Heart right ventricle (tissue), 16 donors: ENCODE measurements at regions of chr2 and their contacts with region 1.

Region 1: DNA sequence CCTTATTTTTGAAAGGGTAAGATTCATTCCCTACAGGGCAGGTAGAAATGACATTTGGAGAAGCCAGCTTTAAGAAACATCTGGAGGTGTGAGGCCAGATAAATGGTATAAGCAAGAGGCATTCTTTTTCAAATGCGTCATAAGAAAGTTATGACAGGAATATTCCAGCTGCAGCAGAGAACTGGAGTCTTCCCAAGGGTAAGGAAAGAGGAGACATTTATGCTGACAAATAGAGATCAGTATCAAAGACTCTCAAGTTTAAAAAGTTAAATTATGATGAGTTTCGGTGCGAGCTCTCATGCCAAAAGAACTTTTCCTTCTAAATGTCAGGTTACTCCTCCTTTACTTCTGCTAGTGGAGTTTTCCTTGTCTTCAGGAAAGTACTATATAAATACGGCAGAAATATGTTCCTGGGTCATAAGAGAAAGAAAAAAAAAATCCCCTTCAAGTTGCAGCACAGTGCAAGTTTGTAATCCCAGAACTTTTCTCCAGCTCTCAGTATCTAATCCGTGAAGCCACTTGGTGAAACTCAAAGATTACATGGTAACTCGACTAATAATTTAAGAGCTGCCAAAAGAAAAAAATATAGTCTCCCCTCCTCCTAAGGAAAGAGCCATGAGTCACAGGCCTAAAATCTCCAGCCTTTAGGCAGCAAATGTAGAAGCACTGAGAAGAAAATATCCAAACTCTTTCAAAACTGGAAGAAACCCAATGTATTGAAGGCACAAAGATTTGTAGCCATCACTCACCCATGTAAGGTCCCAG is 428.1 kb downstream of the MEIS1 start:
- DNase-seq: no peak
- ATAC-seq: peak in 3 of 8 donors; percentile 35 to 42 (median 39)
- H3K4me3 ChIP-seq: no peak overlapping the region
- H3K27ac ChIP-seq: peak overlapping the region in 1 of 10 donors; percentile 40
- H3K4me1 ChIP-seq: peaks cover 0 to 4% (median 0%) of the 10 kb centered on the region in 9 donors
- H3K27me3 ChIP-seq: peaks cover 0 to 3% (median 0%) of the 10 kb centered on the region in 7 donors
- CTCF ChIP-seq: no peak

Region 2: GRCh38 chr2:65443509-65444201 is 1419.4 kb before region 1 on chr2:
- intact Hi-C with region 1: no loop called
- DNase-seq: no peak
- ATAC-seq: no peak
- H3K4me3 ChIP-seq: no peak overlapping the region
- H3K27ac ChIP-seq: no peak overlapping the region
- H3K4me1 ChIP-seq: no peaks in the 10 kb centered on the region
- H3K27me3 ChIP-seq: no peaks in the 10 kb centered on the region
- CTCF ChIP-seq: no peak

Region 3: GRCh38 chr2:66753660-66754059 is 109.4 kb before region 1 on chr2:
- intact Hi-C with region 1: no loop called
- DNase-seq: no peak
- ATAC-seq: no peak
- H3K4me3 ChIP-seq: no peak overlapping the region
- H3K27ac ChIP-seq: no peak overlapping the region
- H3K4me1 ChIP-seq: no peaks in the 10 kb centered on the region
- H3K27me3 ChIP-seq: no peaks in the 10 kb centered on the region
- CTCF ChIP-seq: no peak

Region 4: DNA sequence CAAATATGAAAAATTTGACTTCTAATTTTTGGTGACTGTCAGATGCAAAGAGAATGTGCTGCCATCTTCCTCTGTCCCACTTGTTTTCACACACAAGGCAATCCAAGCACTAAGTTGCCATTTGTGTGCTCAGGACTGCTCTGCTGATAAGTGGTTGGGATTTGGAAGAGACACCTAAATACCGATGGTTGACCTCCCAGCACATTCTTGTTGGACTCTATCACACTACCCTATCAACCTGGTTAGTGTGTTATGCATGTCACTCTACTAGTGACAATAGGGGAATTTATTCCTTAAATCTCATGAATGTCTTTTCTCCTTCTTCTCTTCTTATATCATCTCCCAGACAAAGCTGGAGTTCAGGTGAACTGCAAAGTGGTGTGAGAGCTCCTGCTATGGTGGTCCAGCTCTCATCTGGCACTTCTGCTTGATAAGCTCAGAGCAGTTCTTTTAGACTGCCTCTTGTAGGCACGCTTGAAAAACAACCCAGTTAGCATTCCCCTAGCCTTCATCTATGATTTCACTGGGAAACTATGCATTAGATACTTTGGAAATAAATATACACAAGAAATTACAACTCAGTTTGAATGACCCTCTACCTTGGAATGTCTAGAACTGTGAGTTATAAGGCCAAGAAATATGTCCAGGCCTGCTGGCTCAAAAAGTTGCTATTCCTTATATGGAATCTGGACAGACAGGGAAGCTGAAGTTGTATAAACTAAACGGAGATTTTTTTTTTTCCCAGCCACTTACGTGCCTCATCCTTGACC is 23.3 kb before region 1 on chr2:
- intact Hi-C with region 1: loop called in 1 of 10 experiments (anchors 2 kb)
- DNase-seq: no peak
- ATAC-seq: no peak
- H3K4me3 ChIP-seq: no peak overlapping the region
- H3K27ac ChIP-seq: no peak overlapping the region
- H3K4me1 ChIP-seq: no peaks in the 10 kb centered on the region
- H3K27me3 ChIP-seq: no peaks in the 10 kb centered on the region
- CTCF ChIP-seq: no peak

Region 5: DNA sequence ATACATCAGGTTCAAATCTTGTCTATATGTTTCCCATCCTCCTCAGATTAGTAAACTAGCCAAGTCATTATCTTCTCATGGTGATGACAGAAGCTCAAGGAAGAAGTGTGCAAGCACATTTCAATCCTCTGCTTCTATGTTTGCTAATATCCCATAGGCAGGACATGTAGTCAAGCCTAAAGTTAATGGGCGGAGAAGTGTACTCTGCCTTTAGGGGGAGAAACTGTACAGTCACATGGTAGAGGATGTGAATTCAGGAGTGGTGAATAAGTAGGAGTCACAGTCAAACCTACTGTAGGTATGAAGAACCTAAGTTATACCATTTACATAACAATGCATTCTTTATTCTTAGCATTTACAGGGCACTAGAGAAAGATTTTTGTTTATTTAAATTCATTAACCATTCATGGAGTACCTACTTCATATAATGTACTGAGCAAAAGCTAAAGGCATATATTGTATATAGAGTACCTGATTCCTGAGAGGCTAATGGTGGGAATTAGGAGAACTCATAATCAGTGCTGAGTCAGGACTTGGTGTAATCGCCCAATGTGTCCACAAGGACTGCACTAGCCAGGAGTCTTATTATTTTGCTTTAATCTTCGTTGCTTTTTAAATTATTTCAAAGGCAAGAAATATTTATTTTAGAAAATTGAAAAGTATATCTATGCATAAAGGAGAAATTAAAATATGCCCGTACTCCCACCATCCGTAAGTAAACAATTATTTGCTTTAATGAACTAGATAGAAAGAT is 139.7 kb after region 1 on chr2:
- intact Hi-C with region 1: no loop called
- DNase-seq: no peak
- ATAC-seq: no peak
- H3K4me3 ChIP-seq: no peak overlapping the region
- H3K27ac ChIP-seq: no peak overlapping the region
- H3K4me1 ChIP-seq: no peaks in the 10 kb centered on the region
- H3K27me3 ChIP-seq: no peaks in the 10 kb centered on the region
- CTCF ChIP-seq: no peak

Region 6: DNA sequence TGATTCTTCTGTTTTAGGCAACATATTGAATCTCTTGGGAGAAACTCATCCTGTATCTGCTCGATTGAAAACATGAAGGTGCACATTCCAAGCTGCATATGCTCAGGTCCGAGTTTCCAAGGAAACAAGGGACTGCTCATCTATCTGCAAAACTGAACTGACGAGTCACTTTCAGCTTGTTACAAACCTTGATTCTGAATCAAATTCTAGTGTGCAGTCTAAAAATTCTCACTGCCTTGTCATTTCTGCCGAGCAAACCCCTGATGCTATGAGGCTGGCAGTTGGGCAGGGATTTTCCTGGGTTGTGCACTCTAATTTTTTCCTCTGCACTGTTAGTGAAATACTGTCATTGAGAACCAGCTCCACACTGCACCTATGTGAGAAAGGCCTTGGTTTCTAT is 432.8 kb after region 1 on chr2:
- intact Hi-C with region 1: no loop called
- DNase-seq: no peak
- ATAC-seq: no peak
- H3K4me3 ChIP-seq: no peak overlapping the region
- H3K27ac ChIP-seq: no peak overlapping the region
- H3K4me1 ChIP-seq: no peaks in the 10 kb centered on the region
- H3K27me3 ChIP-seq: peaks cover 0 to 7% (median 0%) of the 10 kb centered on the region in 7 donors
- CTCF ChIP-seq: no peak